PC-9 (cell line): ENCODE measurements at regions of chr12 and their contacts with region 1.

Region 1: GRCh38 chr12:49636979-49637755 is 13.8 kb downstream of the PRPF40B start:
- DNase-seq: peak in 1 of 2 experiments; percentile 33
- H3K4me3 ChIP-seq: no peak overlapping the region
- H3K27ac ChIP-seq: no peak overlapping the region
- H3K4me1 ChIP-seq: peaks cover 9% of the 10 kb centered on the region
- H3K27me3 ChIP-seq: no peaks in the 10 kb centered on the region
- CTCF ChIP-seq: peak; percentile 66

Region 2: DNA sequence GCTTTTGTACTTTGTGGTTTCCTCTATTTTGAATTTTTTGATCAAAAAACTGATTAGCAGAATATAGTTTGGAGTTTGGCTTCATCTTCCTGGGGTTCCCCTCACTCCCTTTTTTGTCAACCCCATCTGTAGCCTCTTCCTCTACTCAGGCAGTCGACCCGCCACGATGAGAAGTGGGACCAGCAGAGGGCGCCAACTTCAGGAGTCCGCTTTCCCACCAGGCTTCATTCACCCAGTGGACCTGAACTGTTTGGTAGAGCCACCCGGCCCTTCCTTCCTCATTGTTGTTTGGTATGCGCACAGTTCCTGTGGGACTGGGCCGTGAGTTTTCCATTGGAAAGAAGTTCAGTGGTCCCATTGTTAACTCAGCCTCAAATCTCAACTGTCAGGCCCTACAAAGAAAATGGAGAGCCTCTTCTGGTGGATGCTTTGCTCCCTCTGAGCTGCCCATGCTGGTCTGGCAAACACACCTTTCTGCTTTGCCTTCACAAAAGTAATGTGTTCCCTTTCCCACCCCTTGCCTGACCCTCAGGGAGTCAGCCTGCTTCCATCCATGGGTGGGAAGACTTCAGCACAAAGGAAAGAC is 125.9 kb after region 1 on chr12:
- CTCF ChIA-PET with region 1: interaction called, 10 read pairs
- POLR2A ChIA-PET with region 1: no interaction called
- intact Hi-C with region 1: no loop called
- DNase-seq: peak in 1 of 2 experiments; percentile 41
- H3K4me3 ChIP-seq: no peak overlapping the region
- H3K27ac ChIP-seq: no peak overlapping the region
- H3K4me1 ChIP-seq: no peaks in the 10 kb centered on the region
- H3K27me3 ChIP-seq: no peaks in the 10 kb centered on the region
- CTCF ChIP-seq: peak; percentile 65